IMR-90 (cell line): ENCODE measurements at regions of chr3 and their contacts with region 1.

Region 1: DNA sequence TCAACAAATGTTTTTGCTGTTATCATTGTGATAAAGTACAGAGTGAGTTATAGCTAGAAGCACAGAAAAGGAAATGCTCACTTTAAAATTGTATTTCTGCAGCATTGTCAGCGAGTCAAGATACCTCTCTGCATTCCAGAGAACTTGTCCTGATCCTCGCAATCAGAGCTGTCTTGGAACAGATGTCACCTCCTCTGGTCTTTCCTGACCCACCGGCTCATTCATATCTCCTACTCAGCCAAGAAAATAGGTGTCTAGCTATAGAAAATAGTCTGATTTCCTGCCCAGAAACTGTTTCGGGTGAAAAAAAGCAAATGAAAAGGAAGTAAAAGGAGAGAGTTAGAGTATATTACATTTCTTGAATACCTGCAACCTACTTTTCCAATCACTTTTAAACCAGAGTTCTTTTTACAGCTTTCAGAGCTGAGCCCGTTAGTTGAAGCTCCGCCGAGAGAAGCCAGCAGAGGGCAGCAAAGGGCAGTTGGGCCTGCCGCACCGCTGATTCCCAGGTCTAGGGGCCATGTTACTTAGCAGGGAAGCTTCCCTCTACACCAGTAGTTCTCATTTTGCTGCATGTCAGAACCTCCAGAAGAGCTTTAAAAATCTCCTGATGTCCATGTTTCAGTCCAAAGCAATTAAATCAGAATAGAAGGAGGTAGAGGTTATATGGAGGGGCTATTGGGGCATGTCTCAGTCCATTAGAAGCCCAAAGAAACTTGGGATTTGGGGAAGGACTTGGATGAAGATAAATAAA is 185.7 kb upstream of the THRB start:
- DNase-seq: no peak
- ATAC-seq: no peak
- H3K4me3 ChIP-seq: no peak overlapping the region
- H3K27ac ChIP-seq: no peak overlapping the region
- H3K4me1 ChIP-seq: peaks cover 2% of the 10 kb centered on the region; the same call in 1 of the 2 replicates
- H3K27me3 ChIP-seq: peaks cover 3% of the 10 kb centered on the region; the same call in 1 of the 2 replicates
- CTCF ChIP-seq: peak; percentile 49
- POLR2A ChIP-seq: no peak
- RAD21 ChIP-seq: peak; percentile 30

Region 2: GRCh38 chr3:23916886-23917678 is 763.3 kb before region 1 on chr3 and contains the starts of genes NKIRAS1 and RPL15:
- CTCF ChIA-PET with region 1: no interaction called
- POLR2A ChIA-PET with region 1: no interaction called
- dilution Hi-C with region 1: no loop called
- in situ Hi-C with region 1: no loop called
- intact Hi-C with region 1: loop called (anchors 10 kb)
- DNase-seq: peak; percentile 96
- ATAC-seq: peak; percentile 95
- H3K4me3 ChIP-seq: peak within 1 kb of the TSS; percentile 57
- H3K27ac ChIP-seq: peak within 1 kb of the TSS; percentile 81
- H3K4me1 ChIP-seq: no peaks in the 10 kb centered on the region
- H3K27me3 ChIP-seq: no peaks in the 10 kb centered on the region
- CTCF ChIP-seq: peak; percentile 27
- POLR2A ChIP-seq: peak; percentile 99
- RAD21 ChIP-seq: no peak
- total RNA-seq, gene NKIRAS1: 6.8 and 16.1 TPM in 2 replicates
- total RNA-seq, gene RPL15: 1,419 and 2,730 TPM in 2 replicates

Region 3: DNA sequence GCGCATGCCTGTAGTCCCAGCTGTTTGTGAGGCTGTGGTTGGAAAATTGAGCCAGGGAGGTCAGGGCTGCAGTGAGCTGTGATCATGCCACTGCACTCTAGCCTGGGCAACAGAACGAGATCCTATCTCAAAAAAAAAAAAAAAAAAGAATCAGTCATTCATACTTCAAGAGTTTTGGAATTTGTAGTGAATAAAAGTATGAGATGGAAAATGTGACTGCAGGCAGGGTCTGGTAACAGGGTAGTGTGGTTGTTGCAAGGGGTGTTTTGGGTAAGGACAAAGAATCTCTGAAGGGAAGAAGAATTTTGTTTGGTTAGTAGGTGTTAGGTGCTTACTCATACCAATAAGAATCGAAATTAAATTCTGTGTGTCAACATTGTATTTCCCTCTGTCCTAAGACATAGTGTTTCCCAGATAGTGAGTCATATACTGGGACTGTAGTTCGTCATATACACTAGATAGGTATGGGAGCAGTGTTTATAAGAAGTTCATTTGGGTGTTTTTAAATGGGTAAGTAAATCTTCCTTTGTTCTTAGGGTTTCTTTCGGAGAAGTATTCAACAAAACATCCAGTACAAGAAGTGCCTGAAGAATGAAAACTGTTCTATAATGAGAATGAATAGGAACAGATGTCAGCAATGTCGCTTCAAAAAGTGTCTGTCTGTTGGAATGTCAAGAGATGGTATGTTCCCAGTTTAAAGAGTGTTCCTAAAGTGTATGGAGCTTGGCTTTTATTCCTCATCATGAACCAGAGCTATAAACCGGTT is 721.1 kb before region 1 on chr3:
- CTCF ChIA-PET with region 1: no interaction called
- POLR2A ChIA-PET with region 1: no interaction called
- dilution Hi-C with region 1: no loop called
- in situ Hi-C with region 1: no loop called
- intact Hi-C with region 1: no loop called
- DNase-seq: peak; percentile 95
- ATAC-seq: peak; percentile 89
- H3K4me3 ChIP-seq: no peak overlapping the region
- H3K27ac ChIP-seq: peak overlapping the region; percentile 53; the same call in 1 of the 2 replicates
- H3K4me1 ChIP-seq: peaks cover 8% of the 10 kb centered on the region
- H3K27me3 ChIP-seq: no peaks in the 10 kb centered on the region
- CTCF ChIP-seq: no peak
- POLR2A ChIP-seq: no peak
- RAD21 ChIP-seq: no peak

Region 4: DNA sequence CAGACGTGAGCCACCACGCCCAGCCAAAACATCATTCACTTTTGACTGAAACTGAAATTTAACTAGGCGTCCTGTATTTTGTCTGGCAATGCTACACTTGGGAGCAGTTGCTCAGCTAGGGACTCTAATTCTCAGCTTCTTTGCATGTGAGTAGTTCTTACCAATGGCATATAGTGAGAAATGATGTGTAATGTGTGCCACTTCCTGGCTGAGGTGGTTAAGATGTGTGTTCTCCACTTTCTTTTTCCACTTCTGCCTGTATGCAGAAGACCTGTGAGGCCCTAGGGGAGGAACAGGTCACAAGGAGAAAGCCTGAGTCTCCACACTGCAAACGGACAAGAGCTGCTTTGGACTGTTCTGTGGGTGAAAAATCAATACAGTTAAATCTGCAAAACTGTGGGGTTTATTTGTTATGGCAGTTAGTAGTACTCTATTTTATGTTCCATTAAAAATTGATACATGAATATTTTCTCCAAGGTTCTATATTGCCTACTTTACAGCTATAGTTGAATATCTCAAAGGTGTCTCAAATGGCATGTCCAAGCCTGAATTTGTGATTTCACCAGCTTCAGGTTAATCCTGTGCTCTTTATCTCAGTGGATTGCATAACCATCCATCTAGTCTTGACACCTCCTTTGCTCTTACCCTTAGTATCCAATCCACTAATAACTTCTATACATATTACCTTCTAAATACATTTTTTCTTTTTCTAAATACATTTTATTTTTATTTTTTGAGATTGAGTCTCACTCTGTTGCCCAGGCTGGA is 676.0 kb before region 1 on chr3:
- CTCF ChIA-PET with region 1: interaction called, 4 read pairs
- POLR2A ChIA-PET with region 1: no interaction called
- dilution Hi-C with region 1: no loop called
- in situ Hi-C with region 1: loop called (anchors 10 kb)
- intact Hi-C with region 1: loop called (anchors 1 kb)
- DNase-seq: no peak
- ATAC-seq: no peak
- H3K4me3 ChIP-seq: no peak overlapping the region
- H3K27ac ChIP-seq: no peak overlapping the region
- H3K4me1 ChIP-seq: no peaks in the 10 kb centered on the region
- H3K27me3 ChIP-seq: no peaks in the 10 kb centered on the region; the same call in none of the 2 replicates
- CTCF ChIP-seq: no peak
- POLR2A ChIP-seq: no peak
- RAD21 ChIP-seq: no peak

Region 5: GRCh38 chr3:24237971-24238767 is 442.2 kb before region 1 on chr3:
- CTCF ChIA-PET with region 1: no interaction called
- POLR2A ChIA-PET with region 1: no interaction called
- dilution Hi-C with region 1: no loop called
- in situ Hi-C with region 1: loop called (anchors 10 kb)
- intact Hi-C with region 1: no loop called
- DNase-seq: peak; percentile 89
- ATAC-seq: peak; percentile 87
- H3K4me3 ChIP-seq: no peak overlapping the region
- H3K27ac ChIP-seq: no peak overlapping the region
- H3K4me1 ChIP-seq: peaks cover 7% of the 10 kb centered on the region
- H3K27me3 ChIP-seq: peaks cover 18% of the 10 kb centered on the region
- CTCF ChIP-seq: peak; percentile 81
- POLR2A ChIP-seq: no peak
- RAD21 ChIP-seq: peak; percentile 80

Region 6: DNA sequence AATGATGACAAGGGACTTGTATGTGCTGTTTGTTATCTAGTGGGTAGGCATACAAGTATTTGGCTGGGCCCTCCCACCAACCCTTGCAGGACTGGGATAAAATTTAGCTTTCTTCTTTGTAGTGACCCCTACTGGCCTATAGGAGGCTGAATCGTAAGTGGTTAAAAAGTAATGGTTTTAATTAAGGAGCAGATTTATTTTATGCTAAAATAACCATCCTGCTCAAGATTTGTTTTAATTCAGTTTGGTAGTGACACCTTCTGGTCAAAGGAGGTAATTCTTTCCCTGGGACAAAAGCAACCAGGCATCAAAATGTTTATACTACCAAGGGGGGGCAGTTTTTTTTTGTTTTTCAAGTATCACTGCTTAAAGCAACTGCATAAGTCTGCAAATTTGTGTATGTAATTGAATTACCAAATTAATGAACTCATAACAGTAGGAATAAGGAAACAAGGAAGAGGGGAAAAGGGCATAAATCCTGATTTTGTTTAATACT is 913.7 kb after region 1 on chr3:
- CTCF ChIA-PET with region 1: no interaction called
- POLR2A ChIA-PET with region 1: no interaction called
- dilution Hi-C with region 1: no loop called
- in situ Hi-C with region 1: no loop called
- intact Hi-C with region 1: loop called (anchors 1 kb)
- DNase-seq: peak; percentile 88
- ATAC-seq: peak; percentile 83
- H3K4me3 ChIP-seq: no peak overlapping the region
- H3K27ac ChIP-seq: no peak overlapping the region
- H3K4me1 ChIP-seq: peaks cover 3% of the 10 kb centered on the region
- H3K27me3 ChIP-seq: no peaks in the 10 kb centered on the region
- CTCF ChIP-seq: peak; percentile 89
- POLR2A ChIP-seq: 0 out of 2 replicates have a peak, but pooled peaks have one; percentile 6
- RAD21 ChIP-seq: peak; percentile 76